ENCODE measurements at regions of chr12 and their contacts with region 1.

Region 1: DNA sequence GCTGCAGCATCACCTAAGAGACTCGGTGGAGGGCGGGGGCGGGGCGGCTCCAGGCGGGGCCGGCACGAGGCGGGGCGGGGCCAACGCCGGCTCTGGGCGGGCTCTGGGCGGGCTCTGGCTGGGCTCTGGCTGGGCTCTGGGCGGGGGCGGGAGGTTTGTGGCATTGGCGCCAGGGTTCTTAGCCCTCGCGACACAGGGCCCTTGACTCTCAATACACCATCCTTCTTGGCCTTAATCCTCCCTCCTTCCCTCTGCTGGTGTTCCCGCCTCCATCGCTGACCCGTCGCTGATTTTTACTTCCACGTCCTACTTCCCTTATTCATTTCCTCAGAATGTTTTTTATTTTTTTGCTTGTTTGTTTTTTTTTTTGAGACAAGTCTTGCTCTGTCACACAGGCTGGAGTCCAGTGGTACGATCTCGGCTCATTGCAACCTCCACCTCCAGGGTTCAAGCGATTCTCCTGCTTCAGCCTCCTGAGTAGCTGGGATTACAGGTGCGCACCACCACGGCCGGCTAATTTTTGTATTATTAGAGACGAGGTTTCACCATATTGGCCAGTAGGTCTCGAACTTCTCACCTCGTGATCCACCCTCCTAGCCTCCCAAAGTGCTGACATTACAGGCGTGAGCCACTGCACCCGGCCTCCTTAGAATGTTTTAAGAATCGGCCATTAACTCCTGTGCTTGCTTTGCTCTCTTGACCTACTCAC is at the start of gene BLTP3B:
- DNase-seq: no peak
- ATAC-seq: peak; percentile 93
- H3K4me3 ChIP-seq: peak within 1 kb of the TSS; percentile 89 to 90
- H3K27ac ChIP-seq: peak within 1 kb of the TSS; percentile 90
- H3K4me1 ChIP-seq: peaks cover 29% of the 10 kb centered on the region
- H3K27me3 ChIP-seq: no peaks in the 10 kb centered on the region
- CTCF ChIP-seq: no peak
- total RNA-seq, gene BLTP3B: 32.2 TPM

Region 2: DNA sequence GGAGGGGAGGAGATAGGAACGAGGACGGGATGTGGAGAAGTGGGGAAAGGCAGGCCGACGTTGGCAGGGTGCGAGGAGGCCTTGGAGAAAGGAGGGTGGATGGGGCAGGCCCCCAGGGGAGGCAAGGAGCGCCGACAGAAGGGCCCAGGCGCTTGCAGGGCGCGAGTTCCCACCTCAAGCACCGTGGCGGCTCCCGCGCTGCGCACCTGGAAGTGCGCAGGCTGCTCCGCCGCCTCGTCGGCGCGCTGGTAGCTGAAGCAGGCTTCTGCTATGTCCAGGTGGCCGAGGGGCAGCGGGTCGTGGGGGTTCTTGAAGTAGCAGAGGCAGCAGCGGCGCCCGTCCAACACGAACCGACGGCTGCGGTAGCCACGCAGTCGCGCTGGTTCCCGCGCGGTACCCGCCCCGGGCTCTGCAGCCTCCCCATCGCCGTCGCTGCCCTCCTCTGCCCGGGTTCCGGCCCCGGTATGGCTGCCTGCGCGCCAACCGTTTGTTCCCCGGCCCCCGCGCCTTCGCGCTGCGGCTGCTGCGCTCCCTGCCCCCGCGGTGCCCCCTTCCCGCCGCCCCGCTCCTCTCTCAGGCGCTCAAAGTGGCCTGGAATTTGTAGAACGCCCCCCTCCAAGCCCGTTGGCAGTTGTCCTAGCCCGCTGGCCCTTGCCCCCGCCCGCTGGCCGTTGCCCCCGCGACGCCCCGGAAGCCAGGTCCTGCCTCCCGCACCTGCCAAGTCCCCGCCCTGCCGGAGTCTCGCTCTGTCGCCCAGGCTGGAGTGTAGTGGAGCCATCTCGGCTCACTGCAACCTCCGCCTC is 56.5 kb after region 1 on chr12:
- CTCF ChIA-PET with region 1: no interaction called
- POLR2A ChIA-PET with region 1: interaction called, 3 read pairs
- in situ Hi-C with region 1: no loop called
- intact Hi-C with region 1: loop called (anchors 5 kb)
- DNase-seq: no peak
- ATAC-seq: peak; percentile 89
- H3K4me3 ChIP-seq: peak overlapping the region; percentile 64 to 79
- H3K27ac ChIP-seq: peak overlapping the region; percentile 83
- H3K4me1 ChIP-seq: peaks cover 8% of the 10 kb centered on the region; the same call in 1 of the 2 replicates
- H3K27me3 ChIP-seq: no peaks in the 10 kb centered on the region
- CTCF ChIP-seq: no peak

Measured in Panc1 (cell line).